Activated B cell treated with CpG ODN at 0.5 μM for 24 hours (primary cell): ENCODE measurements at regions of chr19 and their contacts with region 1.

Region 1: GRCh38 chr19:13952154-13953035 is at the start of gene DCAF15:
- DNase-seq: peak; percentile 89
- ATAC-seq: peak; percentile 96
- H3K4me3 Mint-ChIP-seq: peak within 1 kb of the TSS; percentile 94
- H3K27ac Mint-ChIP-seq: peak within 1 kb of the TSS; percentile 90
- H3K4me1 Mint-ChIP-seq: peaks cover 18% of the 10 kb centered on the region
- H3K27me3 Mint-ChIP-seq: no peaks in the 10 kb centered on the region
- CTCF ChIP-seq: no peak
- total RNA-seq, gene DCAF15: 71.4 and 83.4 TPM in 2 replicates

Region 2: DNA sequence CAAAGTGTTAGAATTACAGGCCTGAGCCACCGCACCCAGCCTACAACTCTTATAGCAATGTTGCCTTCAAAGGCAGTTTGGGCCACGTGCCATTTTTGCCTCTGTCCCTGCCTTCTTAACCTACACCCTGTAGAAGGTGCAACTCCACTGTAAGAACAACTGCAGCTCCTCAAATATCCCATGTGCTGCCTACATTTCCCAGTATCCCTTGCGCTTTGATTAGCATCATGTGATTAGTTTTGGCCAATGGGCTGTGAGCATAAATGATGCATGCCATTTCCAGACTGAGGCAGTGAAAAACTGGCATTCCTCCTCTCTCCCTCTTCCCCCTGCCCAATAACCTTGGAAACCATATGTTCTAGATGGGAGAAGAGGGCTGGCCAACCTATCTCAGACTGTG is 263.3 kb before region 1 on chr19:
- CTCF ChIA-PET with region 1: no interaction called
- POLR2A ChIA-PET with region 1: no interaction called
- intact Hi-C with region 1: no loop called
- DNase-seq: no peak
- ATAC-seq: peak; percentile 25
- H3K4me3 Mint-ChIP-seq: no peak overlapping the region
- H3K27ac Mint-ChIP-seq: no peak overlapping the region
- H3K4me1 Mint-ChIP-seq: no peaks in the 10 kb centered on the region
- H3K27me3 Mint-ChIP-seq: peaks cover 18% of the 10 kb centered on the region
- CTCF ChIP-seq: no peak

Region 3: GRCh38 chr19:13887517-13887916 is 64.9 kb before region 1 on chr19:
- CTCF ChIA-PET with region 1: no interaction called
- POLR2A ChIA-PET with region 1: no interaction called
- intact Hi-C with region 1: no loop called
- DNase-seq: no peak
- ATAC-seq: no peak
- H3K4me3 Mint-ChIP-seq: no peak overlapping the region
- H3K27ac Mint-ChIP-seq: no peak overlapping the region
- H3K4me1 Mint-ChIP-seq: peaks cover under 1% of the 10 kb centered on the region
- H3K27me3 Mint-ChIP-seq: peaks cover 3% of the 10 kb centered on the region
- CTCF ChIP-seq: no peak

Region 4: DNA sequence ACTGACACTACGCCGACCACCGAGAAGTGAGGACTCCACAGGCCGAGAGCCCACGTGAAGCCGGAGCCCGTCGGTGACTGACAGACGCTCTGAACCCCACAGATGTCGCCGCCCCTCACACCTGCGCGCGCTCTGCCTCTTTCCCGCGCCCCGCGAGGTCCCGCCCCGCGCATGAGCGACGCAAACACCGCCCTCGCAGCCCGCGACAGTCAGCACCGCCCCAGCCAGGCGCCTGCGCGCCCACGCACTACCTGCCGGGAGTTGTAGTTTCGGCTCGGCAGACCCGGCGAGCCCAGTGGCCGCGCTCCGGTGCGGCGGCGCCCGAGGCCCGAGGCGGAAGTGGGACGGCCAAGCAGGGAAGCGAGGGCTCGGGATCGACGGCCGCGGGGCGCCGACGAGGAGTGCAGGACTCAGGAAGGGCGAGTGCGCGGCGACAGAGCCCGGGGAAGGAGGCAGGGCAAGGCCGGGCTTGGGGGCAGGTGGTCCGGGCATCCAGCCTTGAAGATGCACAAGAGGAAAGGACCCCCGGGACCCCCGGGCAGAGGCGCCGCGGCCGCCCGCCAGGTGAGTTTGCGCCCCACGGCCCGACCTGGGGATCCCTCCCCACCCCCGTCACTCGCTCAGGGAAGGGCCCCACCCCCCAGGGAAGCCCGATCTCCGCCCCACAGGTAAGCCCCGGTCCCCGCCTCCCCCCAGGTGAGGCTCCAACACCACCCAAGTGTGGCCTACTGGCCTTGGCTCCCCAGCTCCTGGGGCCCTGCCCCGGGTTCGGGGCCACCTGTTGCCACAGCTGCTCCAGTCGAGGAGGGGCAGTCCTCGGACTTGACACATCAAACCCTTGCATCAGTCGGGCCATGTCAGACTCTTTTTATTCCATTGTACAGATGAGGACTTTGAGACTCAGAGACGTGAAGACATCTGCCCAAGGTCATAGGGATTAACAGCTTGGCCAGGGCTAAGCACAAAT is 46.2 kb before region 1 on chr19 and contains the starts of genes BRME1 and CC2D1A:
- CTCF ChIA-PET with region 1: interaction called, 5 read pairs
- POLR2A ChIA-PET with region 1: interaction called, 3 read pairs
- intact Hi-C with region 1: loop called (anchors 1 kb)
- DNase-seq: peak; percentile 93
- ATAC-seq: peak; percentile 99
- H3K4me3 Mint-ChIP-seq: peak within 1 kb of the TSS; percentile 87
- H3K27ac Mint-ChIP-seq: peak within 1 kb of the TSS; percentile 78
- H3K4me1 Mint-ChIP-seq: peaks cover 11% of the 10 kb centered on the region
- H3K27me3 Mint-ChIP-seq: no peaks in the 10 kb centered on the region
- CTCF ChIP-seq: no peak
- total RNA-seq, gene BRME1: 1.2 and 2.0 TPM in 2 replicates
- total RNA-seq, gene CC2D1A: 32.4 and 35.6 TPM in 2 replicates

Region 5: DNA sequence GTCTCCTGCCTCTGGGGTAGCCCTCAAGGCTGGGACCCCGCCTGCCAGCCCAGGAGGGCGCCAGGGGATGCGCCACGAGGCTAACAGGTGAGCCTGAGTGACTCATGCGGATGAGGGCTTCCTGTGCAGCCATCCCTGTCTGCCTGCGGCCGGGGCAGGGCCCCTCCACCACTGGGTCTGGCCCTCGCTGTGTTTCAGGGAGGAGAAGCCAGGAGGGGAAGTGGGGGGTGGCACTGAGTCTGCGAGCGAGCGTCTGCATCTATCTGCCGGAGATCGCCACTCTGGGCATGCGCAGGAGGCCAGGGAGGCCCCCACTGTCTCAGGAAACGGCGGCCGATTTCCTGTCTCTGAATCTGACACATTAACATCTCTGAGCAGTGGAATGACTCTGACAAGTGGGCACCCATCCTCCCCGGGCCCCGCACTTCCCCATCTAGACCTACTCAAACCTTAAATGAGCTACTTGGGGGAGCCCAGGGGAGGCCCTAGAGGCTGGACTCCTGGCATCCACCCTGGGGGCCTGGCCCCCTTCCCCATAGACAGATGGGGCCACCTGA is 34.0 kb after region 1 on chr19:
- CTCF ChIA-PET with region 1: no interaction called
- POLR2A ChIA-PET with region 1: interaction called, 30 read pairs
- intact Hi-C with region 1: loop called (anchors 1 kb)
- DNase-seq: peak; percentile 94
- ATAC-seq: peak; percentile 83
- H3K4me3 Mint-ChIP-seq: peak overlapping the region; percentile 60
- H3K27ac Mint-ChIP-seq: peak overlapping the region; percentile 97
- H3K4me1 Mint-ChIP-seq: peaks cover 78% of the 10 kb centered on the region
- H3K27me3 Mint-ChIP-seq: no peaks in the 10 kb centered on the region
- CTCF ChIP-seq: no peak

Region 6: GRCh38 chr19:14048443-14049153 is 96.2 kb after region 1 on chr19:
- CTCF ChIA-PET with region 1: no interaction called
- POLR2A ChIA-PET with region 1: no interaction called
- intact Hi-C with region 1: loop called (anchors 1 kb)
- DNase-seq: peak; percentile 71
- ATAC-seq: peak; percentile 99
- H3K4me3 Mint-ChIP-seq: no peak overlapping the region
- H3K27ac Mint-ChIP-seq: no peak overlapping the region
- H3K4me1 Mint-ChIP-seq: no peaks in the 10 kb centered on the region
- H3K27me3 Mint-ChIP-seq: no peaks in the 10 kb centered on the region
- CTCF ChIP-seq: no peak

Region 7: DNA sequence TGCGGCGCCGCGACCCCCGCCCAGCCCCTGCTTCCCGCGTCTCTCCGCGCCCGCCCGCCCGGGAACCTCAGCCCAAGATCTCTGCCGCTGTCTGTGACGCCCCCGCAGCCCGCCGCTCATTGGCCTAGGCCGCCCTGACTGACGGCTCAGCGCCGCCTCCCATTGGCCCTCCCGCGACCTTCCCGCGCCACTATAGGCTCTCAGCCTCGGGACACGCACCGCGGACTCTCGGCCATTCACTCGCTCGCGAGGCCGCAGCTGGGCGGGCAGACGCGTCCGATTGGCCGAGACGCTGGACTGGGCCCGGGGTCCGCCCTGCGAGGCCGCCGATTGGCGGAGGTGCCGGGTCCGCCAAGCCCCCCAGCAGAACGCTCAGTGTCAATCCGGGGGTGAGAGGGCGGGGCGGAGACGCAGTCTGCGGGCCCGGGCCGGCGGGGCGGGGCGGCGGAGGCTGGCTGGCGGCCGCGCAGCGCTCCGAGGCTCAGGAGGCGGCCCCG is 165.3 kb after region 1 on chr19 and contains the start of gene PRKACA:
- CTCF ChIA-PET with region 1: no interaction called
- POLR2A ChIA-PET with region 1: no interaction called
- intact Hi-C with region 1: loop called (anchors 1 kb)
- DNase-seq: peak; percentile 95
- ATAC-seq: peak; percentile 95
- H3K4me3 Mint-ChIP-seq: peak within 1 kb of the TSS; percentile 89
- H3K27ac Mint-ChIP-seq: peak within 1 kb of the TSS; percentile 68
- H3K4me1 Mint-ChIP-seq: peaks cover 42% of the 10 kb centered on the region
- H3K27me3 Mint-ChIP-seq: no peaks in the 10 kb centered on the region
- CTCF ChIP-seq: no peak
- total RNA-seq, gene PRKACA: 41.6 and 43.7 TPM in 2 replicates

Region 8: DNA sequence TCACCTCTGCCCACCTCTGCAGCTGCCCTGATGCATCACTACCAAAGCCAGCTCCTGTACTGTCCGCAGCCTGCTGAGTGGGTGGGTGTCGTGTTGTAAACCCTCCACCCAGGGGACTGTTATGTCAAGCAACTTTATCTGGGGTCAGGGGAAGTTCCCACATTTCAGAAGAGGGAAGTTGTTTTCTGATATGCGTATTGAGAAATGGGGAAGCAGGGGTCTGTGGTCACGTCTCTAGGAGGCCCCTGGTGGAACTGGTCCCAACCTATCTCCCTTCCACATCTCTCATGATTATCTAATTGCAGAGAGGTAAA is 661.7 kb after region 1 on chr19:
- CTCF ChIA-PET with region 1: no interaction called
- POLR2A ChIA-PET with region 1: no interaction called
- intact Hi-C with region 1: no loop called
- DNase-seq: no peak
- ATAC-seq: peak; percentile 91
- H3K4me3 Mint-ChIP-seq: peak overlapping the region; percentile 80
- H3K27ac Mint-ChIP-seq: peak overlapping the region; percentile 98
- H3K4me1 Mint-ChIP-seq: peaks cover 61% of the 10 kb centered on the region
- H3K27me3 Mint-ChIP-seq: no peaks in the 10 kb centered on the region
- CTCF ChIP-seq: no peak